ENCODE measurements at regions of chr1 and their contacts with region 1.

Region 1: GRCh38 chr1:240888039-240888786 is 276.3 kb upstream of the GREM2 start:
- DNase-seq: peak in 2 of 3 donors; percentile 48 to 70
- ATAC-seq: peak; percentile 88
- H3K4me3 ChIP-seq: no peak overlapping the region
- H3K4me1 ChIP-seq: no peaks in the 10 kb centered on the region
- CTCF ChIP-seq: peak; percentile 32

Region 2: GRCh38 chr1:240776237-240776636 is 112.0 kb before region 1 on chr1:
- intact Hi-C with region 1: no loop called
- DNase-seq: peak in 1 of 3 donors; percentile 39
- ATAC-seq: peak; percentile 97
- H3K4me3 ChIP-seq: no peak overlapping the region
- H3K4me1 ChIP-seq: no peaks in the 10 kb centered on the region
- CTCF ChIP-seq: no peak

Region 3: GRCh38 chr1:240854367-240854766 is 33.8 kb before region 1 on chr1:
- intact Hi-C with region 1: no loop called
- DNase-seq: no peak
- ATAC-seq: no peak
- H3K4me3 ChIP-seq: no peak overlapping the region
- H3K4me1 ChIP-seq: no peaks in the 10 kb centered on the region
- CTCF ChIP-seq: no peak

Region 4: DNA sequence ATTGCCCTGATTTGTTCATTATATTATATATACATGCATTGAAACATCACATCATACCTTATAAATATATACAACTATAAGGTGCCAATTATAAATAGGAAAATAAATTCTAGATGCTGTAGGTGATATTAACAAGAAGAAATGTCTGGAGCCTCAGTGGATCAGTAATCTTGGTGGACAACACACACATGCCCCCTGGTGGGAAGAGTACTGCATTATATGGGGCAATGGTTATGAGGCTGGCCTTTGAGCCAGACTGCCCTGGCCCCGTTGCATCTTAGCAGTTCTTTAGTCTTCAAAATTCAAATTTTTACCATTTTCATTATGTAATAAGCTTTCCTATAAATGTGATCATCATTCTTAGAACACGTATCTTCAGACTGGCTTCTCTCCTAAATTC is 58.7 kb after region 1 on chr1:
- intact Hi-C with region 1: loop called in 1 of 2 experiments (anchors 2 kb)
- DNase-seq: peak in 2 of 3 donors; percentile 29 to 86
- ATAC-seq: peak; percentile 75
- H3K4me3 ChIP-seq: no peak overlapping the region
- H3K4me1 ChIP-seq: no peaks in the 10 kb centered on the region
- CTCF ChIP-seq: peak; percentile 18